PC-3 (cell line): ENCODE measurements at regions of chr3 and their contacts with region 1.

Region 1: DNA sequence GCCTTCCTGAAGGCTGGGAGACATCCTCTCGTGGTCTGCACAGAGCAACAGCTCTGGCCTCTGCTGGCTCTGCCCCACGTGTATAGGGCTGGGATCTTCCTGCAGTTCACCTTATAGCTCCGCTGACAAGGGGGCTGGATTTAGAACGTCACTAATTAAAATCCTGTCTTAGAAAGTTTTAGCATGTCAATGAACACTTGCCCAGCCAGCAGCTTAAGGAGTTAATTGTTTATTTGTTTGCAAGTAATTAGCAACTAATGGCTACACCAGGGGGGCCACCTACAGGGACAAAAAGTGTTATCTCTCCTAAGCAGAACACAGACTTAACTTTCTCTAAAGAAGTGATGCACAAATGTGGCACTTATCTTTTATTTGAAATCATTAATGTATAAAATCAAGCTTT is at the start of gene HESX1:
- DNase-seq: no peak
- ATAC-seq: no peak
- H3K4me3 ChIP-seq: no peak within 1 kb of the TSS
- H3K27ac ChIP-seq: no peak within 1 kb of the TSS
- H3K4me1 ChIP-seq: no peaks in the 10 kb centered on the region
- H3K27me3 ChIP-seq: no peaks in the 10 kb centered on the region
- CTCF ChIP-seq: no peak
- total RNA-seq, gene HESX1: 3.9 TPM in 1 of 2 replicates, not detected in the other

Region 2: GRCh38 chr3:57091521-57092273 is 108.2 kb before region 1 on chr3:
- CTCF ChIA-PET with region 1: no interaction called
- POLR2A ChIA-PET with region 1: interaction called, 19 read pairs
- intact Hi-C with region 1: no loop called
- DNase-seq: no peak
- ATAC-seq: no peak
- H3K4me3 ChIP-seq: no peak overlapping the region
- H3K27ac ChIP-seq: no peak overlapping the region
- H3K4me1 ChIP-seq: no peaks in the 10 kb centered on the region
- H3K27me3 ChIP-seq: no peaks in the 10 kb centered on the region
- CTCF ChIP-seq: no peak

Region 3: DNA sequence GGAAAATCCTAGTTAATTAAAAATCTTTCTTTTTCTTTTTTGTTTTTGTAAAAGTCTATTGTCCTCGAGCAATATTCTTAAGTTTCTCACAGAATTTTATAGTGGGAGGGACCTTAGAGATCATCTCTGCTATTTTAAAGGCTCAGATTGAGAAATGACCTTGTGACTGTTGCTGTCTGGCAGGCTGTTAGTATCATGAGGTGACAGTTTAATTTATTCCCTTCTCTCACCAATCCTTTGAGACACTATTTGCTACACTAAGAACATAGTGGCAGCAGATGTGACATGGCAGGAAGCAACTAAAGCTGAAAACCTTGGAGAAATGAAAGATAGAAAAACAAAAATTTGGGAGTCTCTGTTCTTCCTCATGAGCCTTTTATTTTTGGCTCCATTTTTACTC is 52.5 kb after region 1 on chr3:
- CTCF ChIA-PET with region 1: no interaction called
- POLR2A ChIA-PET with region 1: no interaction called
- intact Hi-C with region 1: no loop called
- DNase-seq: no peak
- ATAC-seq: no peak
- H3K4me3 ChIP-seq: no peak overlapping the region
- H3K27ac ChIP-seq: no peak overlapping the region
- H3K4me1 ChIP-seq: peaks cover under 1% of the 10 kb centered on the region; the same call in 1 of the 2 replicates
- H3K27me3 ChIP-seq: no peaks in the 10 kb centered on the region
- CTCF ChIP-seq: no peak